CD14-positive monocyte (primary cell): ENCODE measurements at regions of chr6 and their contacts with region 1.

Region 1: GRCh38 chr6:84220809-84221409 is 6.5 kb downstream of the CEP162 start:
- DNase-seq: peak in 2 of 3 donors; percentile 9 to 30
- H3K4me3 ChIP-seq: no peak overlapping the region
- H3K4me3 Mint-ChIP-seq: no peak overlapping the region
- H3K27ac ChIP-seq: no peak overlapping the region
- H3K27ac Mint-ChIP-seq: no peak overlapping the region
- H3K4me1 ChIP-seq: no peaks in the 10 kb centered on the region
- H3K4me1 Mint-ChIP-seq: peaks cover 15% of the 10 kb centered on the region
- H3K27me3 ChIP-seq: no peaks in the 10 kb centered on the region
- H3K27me3 Mint-ChIP-seq: peaks cover 0 to 1% (median 0%) of the 10 kb centered on the region in 3 donors
- CTCF ChIP-seq: peak; percentile 73

Region 2: GRCh38 chr6:83884523-83884922 is 336.4 kb before region 1 on chr6:
- intact Hi-C with region 1: loop called (anchors 5 to 10 kb)
- DNase-seq: peak in 2 of 3 donors; percentile 25 to 52
- H3K4me3 ChIP-seq: no peak overlapping the region
- H3K4me3 Mint-ChIP-seq: no peak overlapping the region
- H3K27ac ChIP-seq: no peak overlapping the region
- H3K27ac Mint-ChIP-seq: no peak overlapping the region
- H3K4me1 ChIP-seq: no peaks in the 10 kb centered on the region
- H3K4me1 Mint-ChIP-seq: peaks cover 4% of the 10 kb centered on the region
- H3K27me3 ChIP-seq: no peaks in the 10 kb centered on the region
- H3K27me3 Mint-ChIP-seq: no peaks in the 10 kb centered on the region
- CTCF ChIP-seq: peak; percentile 75

Region 3: DNA sequence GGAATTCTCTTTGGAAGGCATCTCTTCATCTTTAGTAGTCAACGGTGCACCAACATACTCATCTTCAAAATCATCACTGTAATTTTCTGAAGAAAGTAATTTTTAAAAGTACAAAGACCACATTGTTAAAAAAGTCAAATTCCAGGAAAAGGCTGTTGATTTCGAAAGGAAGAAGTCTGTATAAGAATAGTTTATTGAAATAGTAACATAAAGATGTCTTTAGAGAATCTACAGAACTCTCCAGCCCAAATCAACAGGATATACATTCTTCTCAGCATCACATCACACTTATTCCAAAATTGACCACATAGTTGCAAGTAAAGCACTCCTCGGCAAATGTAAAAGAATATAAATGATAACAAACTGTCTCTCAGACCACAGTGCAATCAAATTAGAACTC is 16.9 kb before region 1 on chr6:
- intact Hi-C with region 1: no loop called
- DNase-seq: no peak
- H3K4me3 ChIP-seq: no peak overlapping the region
- H3K4me3 Mint-ChIP-seq: no peak overlapping the region
- H3K27ac ChIP-seq: no peak overlapping the region
- H3K27ac Mint-ChIP-seq: no peak overlapping the region
- H3K4me1 ChIP-seq: no peaks in the 10 kb centered on the region
- H3K4me1 Mint-ChIP-seq: no peaks in the 10 kb centered on the region
- H3K27me3 ChIP-seq: no peaks in the 10 kb centered on the region
- H3K27me3 Mint-ChIP-seq: no peaks in the 10 kb centered on the region
- CTCF ChIP-seq: no peak

Region 4: DNA sequence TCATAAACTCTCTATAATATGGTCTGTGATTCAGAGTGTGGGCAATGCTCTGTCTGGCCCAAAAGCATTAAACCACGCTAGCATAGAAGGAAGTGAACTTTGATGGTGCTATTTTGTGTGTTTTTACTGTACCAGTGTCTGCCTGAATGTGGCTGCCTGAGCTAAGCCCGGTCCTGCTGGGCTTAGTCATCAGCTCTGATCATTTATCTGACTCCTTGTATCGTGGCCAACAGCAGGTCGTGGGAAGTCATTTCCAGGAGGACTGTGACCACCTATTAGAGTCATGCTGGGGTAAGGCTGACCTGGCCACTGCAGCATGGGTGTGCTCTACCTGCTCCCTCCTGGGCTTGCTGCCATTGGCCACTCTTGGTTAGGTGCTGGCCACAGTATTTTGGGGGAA is 245.6 kb after region 1 on chr6:
- intact Hi-C with region 1: no loop called
- DNase-seq: no peak
- H3K4me3 ChIP-seq: no peak overlapping the region
- H3K4me3 Mint-ChIP-seq: no peak overlapping the region
- H3K27ac ChIP-seq: no peak overlapping the region
- H3K27ac Mint-ChIP-seq: no peak overlapping the region
- H3K4me1 ChIP-seq: no peaks in the 10 kb centered on the region
- H3K4me1 Mint-ChIP-seq: no peaks in the 10 kb centered on the region
- H3K27me3 ChIP-seq: no peaks in the 10 kb centered on the region
- H3K27me3 Mint-ChIP-seq: peaks cover 0 to 2% (median 0%) of the 10 kb centered on the region in 3 donors
- CTCF ChIP-seq: no peak